ENCODE measurements at regions of chr7 and their contacts with region 1.

Region 1: DNA sequence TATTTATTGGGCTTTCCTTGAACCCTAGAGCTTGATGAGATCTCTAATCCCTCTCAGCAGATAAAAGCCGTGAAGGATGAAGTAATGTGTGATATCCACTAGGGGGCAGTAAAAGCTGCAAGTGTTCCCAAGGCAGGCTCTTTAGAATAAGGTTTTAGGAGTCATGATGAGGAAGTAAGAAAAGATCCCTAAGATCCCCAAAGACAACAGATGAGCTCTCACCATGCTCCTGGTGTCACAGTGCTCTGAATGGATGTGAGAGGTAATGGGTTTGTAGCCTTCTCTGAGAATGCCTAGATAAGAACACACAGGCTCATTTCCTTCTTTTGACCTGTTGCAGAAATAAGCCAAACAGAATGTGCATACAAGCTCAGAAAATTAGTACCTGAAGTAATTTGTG is 70.4 kb upstream of the ITPRID1 start:
- DNase-seq: peak; percentile 3
- H3K4me3 Mint-ChIP-seq: no peak overlapping the region
- H3K27ac Mint-ChIP-seq: no peak overlapping the region
- H3K4me1 Mint-ChIP-seq: no peaks in the 10 kb centered on the region
- H3K27me3 Mint-ChIP-seq: no peaks in the 10 kb centered on the region

Region 2: GRCh38 chr7:31488562-31489203 is 45.2 kb after region 1 on chr7:
- CTCF ChIA-PET with region 1: interaction called, 8 read pairs
- intact Hi-C with region 1: loop called (anchors 2 kb)
- DNase-seq: peak; percentile 52
- H3K4me3 Mint-ChIP-seq: no peak overlapping the region
- H3K27ac Mint-ChIP-seq: no peak overlapping the region
- H3K4me1 Mint-ChIP-seq: no peaks in the 10 kb centered on the region
- H3K27me3 Mint-ChIP-seq: no peaks in the 10 kb centered on the region

Region 3: DNA sequence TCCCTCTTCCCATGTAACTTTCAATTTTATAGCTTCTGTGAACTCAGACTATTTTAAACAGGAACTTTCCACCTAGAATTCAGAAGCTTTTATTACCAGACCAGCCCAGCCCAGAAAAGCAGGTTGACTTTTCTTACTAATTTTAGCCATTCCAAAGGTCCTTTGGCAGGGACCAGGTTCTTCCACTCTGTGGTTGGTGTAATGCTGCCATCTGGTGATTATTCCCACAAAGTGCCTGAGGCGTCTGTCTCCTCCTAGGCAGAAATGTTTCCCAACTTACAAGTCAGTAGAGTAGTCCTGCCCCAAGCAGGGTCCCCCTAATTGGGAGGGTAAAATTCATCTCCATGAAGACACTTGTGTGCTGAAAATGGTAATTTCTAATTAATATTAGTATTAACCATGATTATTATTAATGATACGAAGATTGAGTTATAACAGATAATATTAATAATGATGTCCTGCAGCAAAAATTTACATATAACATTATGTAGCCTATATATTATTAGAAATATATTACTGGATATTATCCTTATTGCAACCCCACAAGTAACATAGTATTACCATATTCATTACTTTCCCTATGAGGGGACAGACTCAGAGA is 190.5 kb after region 1 on chr7:
- CTCF ChIA-PET with region 1: interaction called, 9 read pairs
- intact Hi-C with region 1: loop called (anchors 1 kb)
- DNase-seq: peak; percentile 17
- H3K4me3 Mint-ChIP-seq: no peak overlapping the region
- H3K27ac Mint-ChIP-seq: no peak overlapping the region
- H3K4me1 Mint-ChIP-seq: no peaks in the 10 kb centered on the region
- H3K27me3 Mint-ChIP-seq: no peaks in the 10 kb centered on the region

Region 4: DNA sequence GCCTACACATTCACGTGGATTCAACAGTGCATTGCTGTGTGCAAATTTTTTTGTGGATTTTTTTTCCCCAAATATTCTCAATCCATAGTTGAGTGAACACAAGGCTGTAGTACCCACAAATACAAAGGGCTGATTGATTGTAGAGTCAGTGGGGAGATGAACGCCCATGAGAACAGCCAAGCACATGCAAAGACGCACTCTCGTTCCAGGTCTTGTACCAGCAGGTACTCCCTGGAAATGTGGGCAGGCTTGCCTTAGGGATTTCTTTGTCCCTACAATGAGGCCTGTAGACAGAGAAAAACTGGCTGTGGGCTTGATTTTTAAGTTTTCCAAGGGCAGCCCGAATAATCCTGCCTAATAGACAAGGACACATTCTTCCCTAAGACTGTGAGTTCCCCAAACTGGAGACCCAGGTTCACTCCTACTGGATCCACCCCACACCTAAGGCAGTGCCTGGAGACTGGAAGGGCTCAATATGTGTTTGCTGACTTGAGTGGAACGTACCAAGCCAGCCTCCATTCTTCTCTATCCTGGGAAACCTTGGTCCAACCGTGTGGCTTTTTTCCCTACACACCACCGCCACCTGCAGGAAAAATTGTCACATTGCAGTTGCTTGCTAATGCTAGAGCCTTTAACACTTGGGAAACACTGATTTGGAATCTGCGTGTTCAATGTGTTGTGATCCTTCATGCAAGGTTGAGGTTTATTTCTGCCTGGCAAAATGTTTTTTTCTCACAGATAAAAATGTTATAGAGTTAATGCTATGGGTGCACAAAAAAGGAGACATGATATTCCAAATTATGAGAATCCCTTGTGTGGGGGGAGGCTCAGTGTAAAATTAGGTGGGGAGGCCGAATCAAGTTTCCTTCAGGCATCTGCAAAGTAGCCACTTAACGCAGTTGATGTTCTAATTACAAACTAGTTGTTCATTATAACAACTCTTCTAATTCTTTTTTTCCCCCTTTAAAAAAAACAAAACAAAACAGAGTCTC is 292.8 kb after region 1 on chr7:
- CTCF ChIA-PET with region 1: interaction called, 5 read pairs
- intact Hi-C with region 1: loop called (anchors 1 kb)
- DNase-seq: peak; percentile 26
- H3K4me3 Mint-ChIP-seq: no peak overlapping the region
- H3K27ac Mint-ChIP-seq: no peak overlapping the region
- H3K4me1 Mint-ChIP-seq: no peaks in the 10 kb centered on the region
- H3K27me3 Mint-ChIP-seq: peaks cover 4% of the 10 kb centered on the region